ENCODE measurements at regions of chr3 and their contacts with region 1.

Region 1: GRCh38 chr3:167406875-167407492 is 26.9 kb upstream of the ZBBX start:
- DNase-seq: peak; percentile 30

Region 2: DNA sequence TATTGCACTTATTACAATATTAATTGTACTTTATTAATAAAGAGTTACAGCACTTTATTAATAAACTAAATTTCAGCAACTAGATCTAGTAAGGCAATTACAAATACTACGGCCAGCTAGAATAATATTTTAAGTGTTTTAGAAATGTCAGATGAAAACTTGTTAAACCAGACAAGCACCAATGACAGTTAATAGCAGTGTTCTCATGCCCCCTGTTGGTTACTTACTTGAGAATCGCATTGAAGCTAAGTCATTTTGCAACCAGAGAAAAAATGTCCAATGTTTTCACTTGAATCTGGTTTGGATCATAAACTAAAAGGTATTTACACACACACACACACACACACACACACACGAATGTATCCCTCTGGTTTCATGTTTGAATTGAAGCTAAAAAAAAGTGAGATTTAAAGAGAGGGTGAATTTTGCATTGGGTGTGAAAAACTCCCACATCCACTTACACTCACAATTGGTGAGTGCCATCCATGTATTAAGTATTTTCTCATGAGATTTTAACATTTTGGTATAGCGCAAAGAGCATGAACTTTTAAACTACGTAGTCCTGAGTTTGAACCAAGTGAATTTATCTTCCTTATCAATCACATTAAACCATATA is 374.6 kb before region 1 on chr3:
- in situ Hi-C with region 1: no loop called
- DNase-seq: peak; percentile 24

Region 3: DNA sequence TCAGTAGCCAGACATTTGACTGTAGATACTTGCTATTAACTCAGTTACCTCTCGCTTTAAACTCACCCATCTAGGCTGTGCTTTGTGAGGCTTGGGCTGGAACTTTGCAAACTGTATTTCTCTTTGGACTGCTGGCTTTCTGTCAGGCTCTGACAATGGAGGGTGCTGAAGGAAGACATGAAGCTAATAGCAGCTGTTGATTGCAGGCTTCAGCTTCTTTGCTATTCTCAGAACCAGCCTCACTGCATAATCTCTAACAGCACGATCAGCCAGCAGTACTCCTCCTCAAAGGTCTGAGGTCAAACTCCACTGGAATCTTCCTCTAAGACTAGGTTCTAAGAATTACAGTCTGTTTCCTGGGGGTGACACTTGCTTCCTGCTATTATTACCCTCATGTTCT is 322.4 kb before region 1 on chr3:
- in situ Hi-C with region 1: no loop called
- DNase-seq: no peak

Region 4: GRCh38 chr3:167882067-167882667 is 475.2 kb after region 1 on chr3:
- in situ Hi-C with region 1: loop called (anchors 25 kb)
- DNase-seq: peak; percentile 50

Measured in KBM-7 (cell line).